ENCODE measurements at regions of chr4 and their contacts with region 1.

Region 1: DNA sequence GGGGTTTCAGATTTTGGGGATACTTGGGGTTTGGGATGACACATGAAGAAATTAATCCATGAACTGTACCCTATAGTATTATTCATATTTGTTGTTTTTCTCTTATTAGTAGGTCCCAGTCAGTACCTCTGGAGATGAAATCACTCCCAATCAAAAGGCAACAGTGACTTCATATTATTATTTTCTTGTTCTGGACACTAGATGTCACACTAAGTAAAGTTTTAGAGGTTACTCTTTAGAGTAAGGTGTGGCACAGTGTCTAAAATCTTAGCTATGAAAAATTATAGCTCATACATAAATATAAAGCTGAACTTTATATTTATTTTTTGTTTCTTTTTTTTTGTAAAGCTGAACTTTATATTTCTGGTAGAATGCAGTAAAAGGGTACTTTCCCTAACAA is 35.1 kb downstream of the FAM114A1 start:
- DNase-seq: peak in 1 of 35 experiments; percentile 70
- ATAC-seq: peak; percentile 60 to 85 (median 71)
- H3K4me3 ChIP-seq: no peak overlapping the region
- H3K4me3 Mint-ChIP-seq: no peak overlapping the region
- H3K27ac ChIP-seq: no peak overlapping the region
- H3K27ac Mint-ChIP-seq: no peak overlapping the region
- H3K4me1 ChIP-seq: no peaks in the 10 kb centered on the region
- H3K4me1 Mint-ChIP-seq: no peaks in the 10 kb centered on the region
- H3K27me3 ChIP-seq: no peaks in the 10 kb centered on the region
- H3K27me3 Mint-ChIP-seq: peaks cover 0 to 2% of the 10 kb centered on the region in 2 donors

Region 2: GRCh38 chr4:37896206-37896860 is 1006.4 kb before region 1 on chr4:
- CTCF ChIA-PET with region 1: no interaction called
- POLR2A ChIA-PET with region 1: no interaction called
- DNase-seq: no peak
- ATAC-seq: no peak
- H3K4me3 ChIP-seq: no peak overlapping the region
- H3K4me3 Mint-ChIP-seq: no peak overlapping the region
- H3K27ac ChIP-seq: no peak overlapping the region
- H3K27ac Mint-ChIP-seq: no peak overlapping the region
- H3K4me1 ChIP-seq: peaks cover 13 to 25% of the 10 kb centered on the region in 2 experiments
- H3K4me1 Mint-ChIP-seq: peaks cover 71 to 79% (median 79%) of the 10 kb centered on the region in 3 donors
- H3K27me3 ChIP-seq: no peaks in the 10 kb centered on the region
- H3K27me3 Mint-ChIP-seq: no peaks in the 10 kb centered on the region

Region 3: GRCh38 chr4:38759113-38759789 is 143.4 kb before region 1 on chr4:
- CTCF ChIA-PET with region 1: interaction called in 1 of 2 experiments, 17 read pairs
- POLR2A ChIA-PET with region 1: no interaction called
- DNase-seq: peak in 30 of 35 experiments; percentile 19 to 82 (median 43)
- ATAC-seq: peak; percentile 61 to 85 (median 75)
- H3K4me3 ChIP-seq: no peak overlapping the region
- H3K4me3 Mint-ChIP-seq: no peak overlapping the region
- H3K27ac ChIP-seq: no peak overlapping the region
- H3K27ac Mint-ChIP-seq: peak overlapping the region in 1 of 2 donors; percentile 8
- H3K4me1 ChIP-seq: peaks cover 0 to 10% of the 10 kb centered on the region in 2 experiments
- H3K4me1 Mint-ChIP-seq: peaks cover 20 to 27% (median 24%) of the 10 kb centered on the region in 3 donors
- H3K27me3 ChIP-seq: peaks cover 0 to 2% of the 10 kb centered on the region in 2 experiments
- H3K27me3 Mint-ChIP-seq: no peaks in the 10 kb centered on the region

Region 4: GRCh38 chr4:38889143-38889542 is 13.6 kb before region 1 on chr4:
- CTCF ChIA-PET with region 1: interaction called, 4 to 15 read pairs
- POLR2A ChIA-PET with region 1: interaction called in 1 of 2 experiments, 5 read pairs
- DNase-seq: peak in 1 of 35 experiments; percentile 12
- ATAC-seq: peak in 2 of 4 experiments; percentile 36 to 44
- H3K4me3 ChIP-seq: no peak overlapping the region
- H3K4me3 Mint-ChIP-seq: peak overlapping the region in 1 of 3 donors; percentile 37
- H3K27ac ChIP-seq: no peak overlapping the region
- H3K27ac Mint-ChIP-seq: no peak overlapping the region
- H3K4me1 ChIP-seq: no peaks in the 10 kb centered on the region
- H3K4me1 Mint-ChIP-seq: peaks cover 8 to 13% (median 10%) of the 10 kb centered on the region in 3 donors
- H3K27me3 ChIP-seq: no peaks in the 10 kb centered on the region
- H3K27me3 Mint-ChIP-seq: no peaks in the 10 kb centered on the region

Region 5: DNA sequence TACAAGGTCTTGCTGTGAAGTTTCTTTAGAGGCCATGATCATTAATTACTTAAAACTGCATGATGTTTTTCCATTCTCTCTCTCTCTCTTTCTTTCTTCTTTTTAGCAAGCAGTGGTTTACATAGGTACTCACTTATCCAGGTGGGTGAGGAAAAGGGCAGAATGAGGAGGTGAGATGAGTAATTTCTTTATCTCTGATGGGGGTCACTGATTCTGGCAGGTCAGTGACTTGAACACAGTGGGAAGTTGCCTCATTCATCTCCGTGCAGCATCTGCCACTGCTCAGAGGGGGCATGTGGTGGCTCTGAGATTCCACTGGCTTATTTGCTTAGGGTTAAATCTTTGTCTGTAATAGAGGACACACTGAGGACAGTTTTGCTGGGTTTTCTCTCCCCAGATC is 27.5 kb after region 1 on chr4:
- CTCF ChIA-PET with region 1: interaction called, 3 to 11 read pairs
- POLR2A ChIA-PET with region 1: no interaction called
- DNase-seq: no peak
- ATAC-seq: no peak
- H3K4me3 ChIP-seq: no peak overlapping the region
- H3K4me3 Mint-ChIP-seq: no peak overlapping the region
- H3K27ac ChIP-seq: no peak overlapping the region
- H3K27ac Mint-ChIP-seq: no peak overlapping the region
- H3K4me1 ChIP-seq: no peaks in the 10 kb centered on the region
- H3K4me1 Mint-ChIP-seq: no peaks in the 10 kb centered on the region
- H3K27me3 ChIP-seq: peaks cover 0 to 4% of the 10 kb centered on the region in 2 experiments
- H3K27me3 Mint-ChIP-seq: no peaks in the 10 kb centered on the region

Region 6: DNA sequence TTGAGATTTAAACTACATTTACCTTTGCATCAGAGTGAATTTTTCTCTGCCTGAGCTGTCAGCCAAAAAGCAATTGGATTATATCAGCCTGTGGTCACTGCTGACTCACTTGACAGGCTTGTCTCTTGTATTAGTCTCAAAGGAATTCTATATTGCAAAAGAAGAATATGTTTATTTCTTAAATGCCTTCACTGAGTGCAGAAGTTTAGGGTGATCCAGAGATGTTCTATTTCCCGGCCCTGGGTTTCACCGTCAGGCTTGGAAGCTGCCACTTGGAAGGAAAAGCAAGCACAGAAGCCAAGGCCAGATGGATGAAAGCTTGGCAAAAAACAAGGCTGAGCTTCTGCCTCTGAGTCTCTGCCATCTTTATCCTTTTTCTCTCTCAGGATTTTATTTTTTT is 45.9 kb after region 1 on chr4:
- CTCF ChIA-PET with region 1: interaction called in 1 of 2 experiments, 16 read pairs
- POLR2A ChIA-PET with region 1: no interaction called
- DNase-seq: no peak
- ATAC-seq: no peak
- H3K4me3 ChIP-seq: no peak overlapping the region
- H3K4me3 Mint-ChIP-seq: no peak overlapping the region
- H3K27ac ChIP-seq: peak overlapping the region; percentile 48
- H3K27ac Mint-ChIP-seq: peak overlapping the region in 1 of 2 donors; percentile 91
- H3K4me1 ChIP-seq: peaks cover 7 to 13% of the 10 kb centered on the region in 2 experiments
- H3K4me1 Mint-ChIP-seq: peaks cover 21 to 31% (median 28%) of the 10 kb centered on the region in 3 donors
- H3K27me3 ChIP-seq: no peaks in the 10 kb centered on the region
- H3K27me3 Mint-ChIP-seq: no peaks in the 10 kb centered on the region

Region 7: GRCh38 chr4:39032218-39033085 is 129.8 kb after region 1 on chr4 and contains the start of gene TMEM156:
- CTCF ChIA-PET with region 1: interaction called, 6 to 7 read pairs
- POLR2A ChIA-PET with region 1: interaction called in 1 of 2 experiments, 10 read pairs
- DNase-seq: peak in 4 of 35 experiments; percentile 20 to 79 (median 27)
- ATAC-seq: peak; percentile 87 to 94 (median 90)
- H3K4me3 ChIP-seq: peak within 1 kb of the TSS; percentile 53 to 69
- H3K4me3 Mint-ChIP-seq: peak within 1 kb of the TSS; percentile 78 to 81 (median 79)
- H3K27ac ChIP-seq: peak within 1 kb of the TSS; percentile 62
- H3K27ac Mint-ChIP-seq: peak within 1 kb of the TSS; percentile 84 to 86
- H3K4me1 ChIP-seq: peaks cover 25 to 41% of the 10 kb centered on the region in 2 experiments
- H3K4me1 Mint-ChIP-seq: peaks cover 42 to 47% (median 45%) of the 10 kb centered on the region in 3 donors
- H3K27me3 ChIP-seq: no peaks in the 10 kb centered on the region
- H3K27me3 Mint-ChIP-seq: no peaks in the 10 kb centered on the region
- total RNA-seq, gene TMEM156: 7.5 to 23.1 (median 12.5) TPM

Region 8: GRCh38 chr4:39134683-39135319 is 232.1 kb after region 1 on chr4:
- CTCF ChIA-PET with region 1: interaction called, 31 to 117 read pairs
- POLR2A ChIA-PET with region 1: interaction called in 1 of 2 experiments, 3 read pairs
- DNase-seq: no peak
- ATAC-seq: peak in 1 of 4 experiments; percentile 23
- H3K4me3 ChIP-seq: no peak overlapping the region
- H3K4me3 Mint-ChIP-seq: no peak overlapping the region
- H3K27ac ChIP-seq: no peak overlapping the region
- H3K27ac Mint-ChIP-seq: no peak overlapping the region
- H3K4me1 ChIP-seq: peaks cover 0 to 3% of the 10 kb centered on the region in 2 experiments
- H3K4me1 Mint-ChIP-seq: peaks cover 6 to 13% (median 10%) of the 10 kb centered on the region in 3 donors
- H3K27me3 ChIP-seq: no peaks in the 10 kb centered on the region
- H3K27me3 Mint-ChIP-seq: no peaks in the 10 kb centered on the region

Region 9: DNA sequence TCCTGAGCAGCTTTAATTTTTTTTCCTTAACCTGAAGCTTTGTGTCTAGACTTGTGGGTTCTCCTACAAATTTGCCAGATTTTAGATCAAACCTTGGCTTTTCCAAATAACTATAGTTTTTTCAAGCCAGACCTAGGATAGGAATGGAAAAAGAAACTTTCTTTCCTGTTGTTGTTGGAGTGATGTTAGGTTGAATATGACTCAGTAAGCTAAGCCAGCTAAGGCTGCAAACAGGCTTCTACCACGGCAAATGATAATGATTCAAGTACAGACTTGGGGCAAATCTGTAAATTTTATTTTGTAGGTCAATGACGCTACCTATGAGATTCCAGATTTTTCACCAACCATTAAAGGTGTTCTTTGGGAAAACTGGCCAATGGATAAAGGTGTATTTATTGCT is 325.2 kb after region 1 on chr4:
- CTCF ChIA-PET with region 1: no interaction called
- POLR2A ChIA-PET with region 1: no interaction called
- DNase-seq: no peak
- ATAC-seq: no peak
- H3K4me3 ChIP-seq: no peak overlapping the region
- H3K4me3 Mint-ChIP-seq: no peak overlapping the region
- H3K27ac ChIP-seq: no peak overlapping the region
- H3K27ac Mint-ChIP-seq: no peak overlapping the region
- H3K4me1 ChIP-seq: no peaks in the 10 kb centered on the region
- H3K4me1 Mint-ChIP-seq: no peaks in the 10 kb centered on the region
- H3K27me3 ChIP-seq: no peaks in the 10 kb centered on the region
- H3K27me3 Mint-ChIP-seq: no peaks in the 10 kb centered on the region